ENCODE measurements at regions of chr11 and their contacts with region 1.

Region 1: GRCh38 chr11:9757809-9758636 is 94.1 kb downstream of the SWAP70 start:
- DNase-seq: peak; percentile 94
- H3K4me3 Mint-ChIP-seq: peak overlapping the region; percentile 73
- H3K27ac Mint-ChIP-seq: peak overlapping the region; percentile 81
- H3K4me1 Mint-ChIP-seq: peaks cover 42% of the 10 kb centered on the region
- H3K27me3 Mint-ChIP-seq: no peaks in the 10 kb centered on the region

Region 2: GRCh38 chr11:9158898-9159391 is 599.1 kb before region 1 on chr11:
- CTCF ChIA-PET with region 1: no interaction called
- intact Hi-C with region 1: loop called (anchors 10 kb)
- DNase-seq: no peak
- H3K4me3 Mint-ChIP-seq: no peak overlapping the region
- H3K27ac Mint-ChIP-seq: peak overlapping the region; percentile 84
- H3K4me1 Mint-ChIP-seq: peaks cover 29% of the 10 kb centered on the region
- H3K27me3 Mint-ChIP-seq: no peaks in the 10 kb centered on the region

Region 3: DNA sequence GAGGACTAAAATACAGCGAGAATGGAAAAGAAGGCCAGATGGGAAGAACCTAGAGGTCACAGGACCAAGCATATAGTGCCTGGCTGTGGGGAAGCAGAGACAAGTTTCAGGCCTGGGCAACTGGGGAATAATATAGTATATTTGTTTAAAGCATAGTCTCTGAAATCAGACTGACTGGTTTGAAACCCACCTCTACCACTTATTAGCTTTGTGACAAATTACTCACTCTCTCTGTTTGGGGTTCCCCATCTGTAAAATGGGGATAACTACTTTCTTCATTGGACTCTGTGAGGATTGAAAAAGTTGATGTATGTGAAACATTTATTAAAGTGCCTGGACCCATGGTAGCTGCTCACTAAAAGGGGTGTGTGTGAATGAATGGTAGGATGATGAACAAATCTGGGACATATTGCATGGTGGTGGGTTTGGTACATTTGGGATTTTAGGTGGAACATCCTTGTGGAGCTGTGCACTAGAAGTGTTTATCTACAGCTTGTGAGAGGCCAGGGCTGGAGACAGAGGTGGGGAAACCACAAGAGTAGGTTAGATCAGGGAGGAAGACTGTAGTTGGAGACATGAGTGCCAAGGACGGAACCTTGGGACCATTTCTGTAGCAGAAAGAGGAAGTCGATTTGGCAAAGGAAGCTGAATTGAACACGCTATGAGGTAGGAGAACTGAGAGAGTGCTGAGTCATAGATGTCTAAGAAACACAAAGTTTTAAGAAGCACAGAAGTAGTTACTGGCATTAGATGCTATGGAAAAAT is 41.6 kb before region 1 on chr11:
- CTCF ChIA-PET with region 1: interaction called, 3 read pairs
- intact Hi-C with region 1: loop called (anchors 2 kb)
- DNase-seq: peak; percentile 41
- H3K4me3 Mint-ChIP-seq: no peak overlapping the region
- H3K27ac Mint-ChIP-seq: peak overlapping the region; percentile 66
- H3K4me1 Mint-ChIP-seq: peaks cover 29% of the 10 kb centered on the region
- H3K27me3 Mint-ChIP-seq: peaks cover 4% of the 10 kb centered on the region

Region 4: GRCh38 chr11:9972989-9973388 is 215.0 kb after region 1 on chr11:
- CTCF ChIA-PET with region 1: interaction called, 31 read pairs
- intact Hi-C with region 1: loop called (anchors 1 kb)
- DNase-seq: peak; percentile 54
- H3K4me3 Mint-ChIP-seq: no peak overlapping the region
- H3K27ac Mint-ChIP-seq: no peak overlapping the region
- H3K4me1 Mint-ChIP-seq: no peaks in the 10 kb centered on the region
- H3K27me3 Mint-ChIP-seq: no peaks in the 10 kb centered on the region

Region 5: DNA sequence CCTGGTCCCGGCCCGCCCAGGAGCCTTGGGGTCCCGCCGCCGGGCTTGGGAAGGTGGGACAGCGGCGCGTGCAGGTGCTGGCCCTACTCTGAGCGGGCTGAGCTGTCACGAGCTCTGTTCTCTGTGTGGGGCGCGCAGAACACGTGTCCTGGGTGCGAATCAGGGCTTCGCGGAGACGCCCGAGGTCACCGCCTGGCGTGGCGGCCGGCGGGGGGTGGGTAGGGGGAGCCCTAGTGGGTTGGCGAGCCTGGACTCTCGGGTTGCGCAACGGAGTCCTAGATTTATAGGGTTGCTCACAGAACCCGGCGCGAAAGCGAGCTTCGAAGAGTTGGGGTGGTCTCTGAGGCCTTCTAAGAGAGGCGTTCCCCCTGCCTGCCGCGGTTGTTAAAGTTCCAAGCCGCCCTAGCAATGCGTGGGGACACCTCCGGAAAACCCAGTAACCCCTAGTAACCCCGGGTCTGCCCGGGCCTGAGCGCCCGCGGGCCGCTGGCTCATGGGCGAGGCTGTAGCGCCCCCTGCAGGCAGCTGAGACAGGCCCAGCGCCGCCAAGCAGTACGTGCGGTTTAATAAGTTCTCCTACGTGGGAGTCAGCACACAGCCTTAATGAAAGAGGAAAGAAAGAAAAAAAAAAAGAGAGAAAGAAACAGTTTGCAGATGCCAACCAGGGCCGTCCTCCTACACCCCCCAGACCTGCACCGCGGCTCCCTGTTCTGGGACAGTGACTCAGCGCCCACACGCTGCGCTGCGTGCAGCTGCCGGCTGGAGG is 549.6 kb after region 1 on chr11:
- CTCF ChIA-PET with region 1: interaction called, 16 read pairs
- intact Hi-C with region 1: loop called (anchors 1 kb)
- DNase-seq: peak; percentile 87
- H3K4me3 Mint-ChIP-seq: peak overlapping the region; percentile 81
- H3K27ac Mint-ChIP-seq: peak overlapping the region; percentile 59
- H3K4me1 Mint-ChIP-seq: peaks cover 33% of the 10 kb centered on the region
- H3K27me3 Mint-ChIP-seq: peaks cover 41% of the 10 kb centered on the region

Region 6: GRCh38 chr11:10455637-10456487 is 697.8 kb after region 1 on chr11:
- CTCF ChIA-PET with region 1: no interaction called
- intact Hi-C with region 1: loop called (anchors 5 kb)
- DNase-seq: peak; percentile 87
- H3K4me3 Mint-ChIP-seq: peak overlapping the region; percentile 82
- H3K27ac Mint-ChIP-seq: peak overlapping the region; percentile 93
- H3K4me1 Mint-ChIP-seq: peaks cover 85% of the 10 kb centered on the region
- H3K27me3 Mint-ChIP-seq: no peaks in the 10 kb centered on the region